Calu3 (cell line): ENCODE measurements at regions of chr6 and their contacts with region 1.

Region 1: GRCh38 chr6:2448820-2449571 is 203.6 kb upstream of the GMDS start:
- DNase-seq: peak; percentile 45
- H3K4me3 Mint-ChIP-seq: peak overlapping the region; percentile 66
- H3K27ac Mint-ChIP-seq: peak overlapping the region; percentile 73
- H3K4me1 Mint-ChIP-seq: peaks cover 14% of the 10 kb centered on the region
- H3K27me3 Mint-ChIP-seq: no peaks in the 10 kb centered on the region
- CTCF ChIP-seq: peak; percentile 44

Region 2: DNA sequence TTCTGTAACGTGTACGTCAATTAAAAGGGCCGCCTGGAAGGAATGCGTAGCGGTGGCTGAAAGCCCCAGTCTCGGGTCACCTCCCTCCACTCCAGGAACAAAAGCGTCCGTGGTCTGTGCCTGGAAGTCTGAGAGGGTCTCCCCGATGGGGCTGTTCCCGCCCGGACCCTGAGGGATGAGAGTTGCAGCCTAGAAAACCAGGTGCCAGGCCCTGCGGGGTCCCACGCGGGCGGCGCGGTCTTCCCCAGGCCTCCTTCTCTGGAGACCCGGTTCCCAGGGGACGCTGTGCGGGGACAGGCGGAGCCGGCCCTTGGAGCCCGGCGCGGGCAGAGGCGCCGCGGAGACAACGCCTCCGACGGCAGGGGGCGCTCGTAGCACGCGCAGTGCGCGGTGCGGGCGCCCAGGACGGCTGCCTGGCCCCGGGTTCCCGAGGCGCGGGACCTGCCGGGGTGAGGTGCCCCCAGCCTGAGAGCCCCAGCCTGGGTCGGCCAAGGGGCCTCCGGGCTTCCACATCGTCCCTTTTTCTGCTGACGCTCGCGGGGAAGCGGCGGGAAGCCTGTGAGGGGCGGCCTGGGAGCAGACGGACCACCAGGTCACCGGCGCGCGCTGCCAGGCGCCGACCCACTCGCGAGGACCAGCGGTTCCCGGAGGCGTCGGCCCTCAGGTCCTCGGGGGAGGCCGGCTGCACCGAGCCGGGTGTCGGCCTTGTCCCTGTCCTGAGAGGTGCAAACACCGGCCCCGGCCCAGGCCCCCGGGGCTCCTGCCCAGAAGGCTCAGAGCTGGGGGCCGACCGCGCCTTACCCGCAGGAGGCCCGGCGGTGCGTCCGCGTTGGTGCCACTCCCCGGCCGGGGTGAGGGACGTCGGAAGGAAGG is 844.6 kb before region 1 on chr6:
- CTCF ChIA-PET with region 1: no interaction called
- intact Hi-C with region 1: loop called (anchors 2 kb)
- DNase-seq: peak; percentile 84
- H3K4me3 Mint-ChIP-seq: peak overlapping the region; percentile 37
- H3K27ac Mint-ChIP-seq: no peak overlapping the region
- H3K4me1 Mint-ChIP-seq: peaks cover 8% of the 10 kb centered on the region
- H3K27me3 Mint-ChIP-seq: peaks cover 12% of the 10 kb centered on the region
- CTCF ChIP-seq: peak; percentile 87

Region 3: GRCh38 chr6:2103644-2104523 is 345.1 kb before region 1 on chr6:
- CTCF ChIA-PET with region 1: no interaction called
- intact Hi-C with region 1: loop called (anchors 10 kb)
- DNase-seq: no peak
- H3K4me3 Mint-ChIP-seq: peak overlapping the region; percentile 54
- H3K27ac Mint-ChIP-seq: peak overlapping the region; percentile 66
- H3K4me1 Mint-ChIP-seq: peaks cover 8% of the 10 kb centered on the region
- H3K27me3 Mint-ChIP-seq: no peaks in the 10 kb centered on the region
- CTCF ChIP-seq: no peak

Region 4: GRCh38 chr6:2209226-2209809 is 239.7 kb before region 1 on chr6:
- CTCF ChIA-PET with region 1: interaction called, 5 read pairs
- intact Hi-C with region 1: loop called (anchors 5 kb)
- DNase-seq: peak; percentile 73
- H3K4me3 Mint-ChIP-seq: no peak overlapping the region
- H3K27ac Mint-ChIP-seq: no peak overlapping the region
- H3K4me1 Mint-ChIP-seq: no peaks in the 10 kb centered on the region
- H3K27me3 Mint-ChIP-seq: no peaks in the 10 kb centered on the region
- CTCF ChIP-seq: peak; percentile 49

Region 5: GRCh38 chr6:2353412-2354137 is 95.4 kb before region 1 on chr6:
- CTCF ChIA-PET with region 1: no interaction called
- intact Hi-C with region 1: loop called (anchors 5 kb)
- DNase-seq: peak; percentile 68
- H3K4me3 Mint-ChIP-seq: no peak overlapping the region
- H3K27ac Mint-ChIP-seq: no peak overlapping the region
- H3K4me1 Mint-ChIP-seq: no peaks in the 10 kb centered on the region
- H3K27me3 Mint-ChIP-seq: no peaks in the 10 kb centered on the region
- CTCF ChIP-seq: peak; percentile 42

Region 6: GRCh38 chr6:2434116-2434515 is 14.9 kb before region 1 on chr6:
- CTCF ChIA-PET with region 1: no interaction called
- intact Hi-C with region 1: no loop called
- DNase-seq: peak; percentile 78
- H3K4me3 Mint-ChIP-seq: no peak overlapping the region
- H3K27ac Mint-ChIP-seq: peak overlapping the region; percentile 63
- H3K4me1 Mint-ChIP-seq: peaks cover 34% of the 10 kb centered on the region
- H3K27me3 Mint-ChIP-seq: no peaks in the 10 kb centered on the region
- CTCF ChIP-seq: no peak

Region 7: DNA sequence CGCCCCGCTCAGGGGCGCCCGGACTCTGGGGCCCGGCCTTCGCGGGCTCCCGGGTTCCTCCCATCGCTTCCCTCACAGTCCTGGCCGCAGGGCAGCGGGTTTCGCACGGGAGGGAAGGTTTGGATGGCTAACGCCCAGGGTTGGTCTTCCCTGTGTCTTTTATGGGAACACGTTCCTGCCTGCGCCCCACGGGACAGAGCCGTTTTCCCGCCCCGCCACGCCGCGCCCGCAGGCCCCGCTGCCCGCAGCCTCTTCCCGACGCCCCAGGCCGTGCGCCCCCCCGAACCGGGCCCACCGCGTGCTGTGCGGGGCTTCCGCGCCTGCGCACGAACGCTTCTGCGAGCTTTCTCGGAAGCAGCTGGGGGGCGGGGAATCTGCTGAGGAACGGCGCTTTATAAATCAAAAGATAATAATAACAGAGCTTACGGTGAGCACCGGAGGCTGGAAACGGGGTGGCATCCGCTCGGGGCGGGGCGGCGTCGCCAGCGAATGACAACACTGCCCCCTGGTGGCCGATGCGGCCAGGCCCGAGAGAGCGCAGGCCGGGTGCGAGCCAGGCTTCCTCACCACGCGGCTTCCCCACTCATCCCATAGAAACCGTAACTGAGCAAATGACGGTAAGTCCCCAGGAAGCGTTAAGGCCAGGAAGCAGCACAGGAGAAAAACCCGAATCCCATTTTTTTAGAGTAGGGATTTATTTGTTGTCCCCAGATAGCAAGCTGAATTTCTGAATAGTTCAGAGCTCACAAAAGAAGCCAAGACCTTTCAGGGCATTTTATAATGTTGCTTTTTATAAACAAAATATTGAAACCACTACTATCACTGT is 185.4 kb after region 1 on chr6:
- CTCF ChIA-PET with region 1: interaction called, 5 read pairs
- intact Hi-C with region 1: loop called (anchors 10 kb)
- DNase-seq: peak; percentile 86
- H3K4me3 Mint-ChIP-seq: peak overlapping the region; percentile 70
- H3K27ac Mint-ChIP-seq: no peak overlapping the region
- H3K4me1 Mint-ChIP-seq: peaks cover 17% of the 10 kb centered on the region
- H3K27me3 Mint-ChIP-seq: peaks cover 8% of the 10 kb centered on the region
- CTCF ChIP-seq: peak; percentile 93